OCI-LY7 (cell line): ENCODE measurements at regions of chr11 and their contacts with region 1.

Region 1: DNA sequence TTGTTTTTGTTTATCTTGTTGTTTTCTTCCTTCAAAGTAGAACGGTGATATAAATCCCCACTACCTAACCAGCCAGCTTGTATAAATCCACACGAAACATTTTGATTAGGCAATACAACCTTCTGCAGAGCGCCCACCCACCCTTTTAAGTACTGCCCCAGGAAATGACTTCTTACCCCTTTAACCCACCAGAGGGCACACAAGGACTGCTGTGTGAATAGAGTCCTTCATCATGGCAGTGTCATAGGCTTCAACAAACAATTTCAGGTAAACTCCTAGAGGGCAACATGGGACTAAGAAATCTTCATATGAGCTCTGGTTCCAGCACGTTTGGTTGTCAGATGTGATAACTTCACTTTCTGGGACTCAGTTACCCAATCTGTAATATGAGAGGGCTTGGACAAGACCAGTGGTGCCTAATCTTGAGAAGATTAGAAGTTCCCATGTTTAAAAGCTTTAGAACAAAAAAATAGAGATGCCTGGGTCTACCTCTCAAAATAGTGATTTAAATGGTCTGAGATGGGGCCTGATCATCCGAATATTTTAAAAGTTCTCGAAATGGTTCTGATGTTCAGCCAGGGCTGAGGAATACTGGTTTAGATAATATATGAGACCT is 56.1 kb downstream of the PIWIL4 start:
- DNase-seq: peak; percentile 63
- H3K4me3 ChIP-seq: no peak overlapping the region
- H3K27ac ChIP-seq: no peak overlapping the region
- H3K4me1 ChIP-seq: no peaks in the 10 kb centered on the region
- CTCF ChIP-seq: peak; percentile 79

Region 2: GRCh38 chr11:94786264-94787126 is 163.3 kb after region 1 on chr11:
- CTCF ChIA-PET with region 1: no interaction called
- POLR2A ChIA-PET with region 1: no interaction called
- intact Hi-C with region 1: loop called (anchors 10 kb)
- DNase-seq: peak; percentile 20
- H3K4me3 ChIP-seq: no peak overlapping the region
- H3K27ac ChIP-seq: no peak overlapping the region
- H3K4me1 ChIP-seq: no peaks in the 10 kb centered on the region
- CTCF ChIP-seq: peak; percentile 79